ENCODE measurements at regions of chr9 and their contacts with region 1.

Region 1: DNA sequence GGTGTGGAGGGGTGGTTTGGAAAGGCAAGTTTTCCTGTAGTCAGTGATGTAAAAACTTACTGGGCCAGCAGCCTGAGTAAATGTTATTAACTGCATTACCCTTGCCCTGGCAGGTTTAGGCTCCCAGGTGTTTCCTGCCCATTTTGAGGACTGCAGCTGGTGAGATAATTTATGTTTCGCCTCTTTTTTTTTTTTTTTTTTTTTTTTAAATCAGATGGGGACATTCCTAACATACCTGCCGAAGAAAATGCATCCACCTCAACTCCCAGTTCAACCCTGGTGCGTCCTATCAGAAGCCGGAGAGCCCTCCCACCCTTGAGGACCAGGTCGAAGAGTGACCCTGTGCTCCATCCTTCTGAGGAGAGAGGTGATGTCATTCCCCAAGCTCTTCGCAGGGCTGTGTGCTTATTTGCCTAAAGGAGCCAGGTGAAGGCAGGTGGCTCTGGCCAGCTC is 60.6 kb downstream of the ENTREP1 start:
- DNase-seq: no peak
- ATAC-seq: no peak
- H3K4me3 ChIP-seq: no peak overlapping the region
- H3K27ac ChIP-seq: peak overlapping the region in 1 of 12 donors; percentile 67
- H3K4me1 ChIP-seq: peaks cover 0 to 26% (median 9%) of the 10 kb centered on the region in 12 donors
- H3K27me3 ChIP-seq: no peaks in the 10 kb centered on the region
- CTCF ChIP-seq: no peak
- POLR2A ChIP-seq: no peak

Region 2: GRCh38 chr9:69279084-69279729 is 106.4 kb before region 1 on chr9:
- intact Hi-C with region 1: loop called in 1 of 10 experiments (anchors 10 kb)
- DNase-seq: no peak
- ATAC-seq: no peak
- H3K4me3 ChIP-seq: no peak overlapping the region
- H3K27ac ChIP-seq: no peak overlapping the region
- H3K4me1 ChIP-seq: peaks cover 0 to 4% (median 0%) of the 10 kb centered on the region in 12 donors
- H3K27me3 ChIP-seq: no peaks in the 10 kb centered on the region
- CTCF ChIP-seq: no peak
- POLR2A ChIP-seq: no peak